ENCODE measurements at regions of chr12 and their contacts with region 1.

Region 1: GRCh38 chr12:66708704-66709456 is 30.0 kb upstream of the GRIP1 start:
- DNase-seq: no peak

Region 2: DNA sequence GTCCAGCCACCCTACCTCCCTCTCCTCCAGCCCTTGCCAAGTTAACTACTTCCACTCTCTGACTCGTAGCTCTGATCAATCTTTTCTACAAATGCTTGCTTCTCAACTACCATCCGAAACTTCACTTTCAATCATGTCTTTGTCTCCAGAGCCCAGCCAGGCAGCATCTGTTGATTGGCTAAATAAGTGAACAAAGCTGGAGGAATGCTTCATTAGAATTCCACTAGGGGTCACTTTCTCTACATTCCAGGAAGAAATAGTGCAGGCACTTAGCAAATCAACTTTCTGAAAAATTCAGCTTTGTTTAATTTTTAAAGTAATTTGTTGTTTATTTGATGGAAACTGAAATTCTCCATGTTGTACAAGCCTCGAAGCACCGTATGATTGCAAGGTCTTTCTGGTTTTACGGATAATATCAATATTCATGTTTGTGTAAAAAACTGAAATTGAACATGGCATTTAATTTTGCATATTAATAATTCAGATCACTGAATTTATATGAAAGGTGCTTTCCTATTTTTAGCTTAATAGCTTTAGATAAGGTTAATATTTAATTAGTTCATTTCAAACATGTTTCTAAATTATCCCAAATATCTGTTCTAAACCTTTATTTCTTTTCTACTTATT is 439.0 kb before region 1 on chr12:
- intact Hi-C with region 1: loop called (anchors 10 kb)
- DNase-seq: no peak

Region 3: GRCh38 chr12:66776974-66777373 is 68.1 kb after region 1 on chr12:
- intact Hi-C with region 1: no loop called
- DNase-seq: no peak